ENCODE measurements at regions of chr17 and their contacts with region 1.

Region 1: DNA sequence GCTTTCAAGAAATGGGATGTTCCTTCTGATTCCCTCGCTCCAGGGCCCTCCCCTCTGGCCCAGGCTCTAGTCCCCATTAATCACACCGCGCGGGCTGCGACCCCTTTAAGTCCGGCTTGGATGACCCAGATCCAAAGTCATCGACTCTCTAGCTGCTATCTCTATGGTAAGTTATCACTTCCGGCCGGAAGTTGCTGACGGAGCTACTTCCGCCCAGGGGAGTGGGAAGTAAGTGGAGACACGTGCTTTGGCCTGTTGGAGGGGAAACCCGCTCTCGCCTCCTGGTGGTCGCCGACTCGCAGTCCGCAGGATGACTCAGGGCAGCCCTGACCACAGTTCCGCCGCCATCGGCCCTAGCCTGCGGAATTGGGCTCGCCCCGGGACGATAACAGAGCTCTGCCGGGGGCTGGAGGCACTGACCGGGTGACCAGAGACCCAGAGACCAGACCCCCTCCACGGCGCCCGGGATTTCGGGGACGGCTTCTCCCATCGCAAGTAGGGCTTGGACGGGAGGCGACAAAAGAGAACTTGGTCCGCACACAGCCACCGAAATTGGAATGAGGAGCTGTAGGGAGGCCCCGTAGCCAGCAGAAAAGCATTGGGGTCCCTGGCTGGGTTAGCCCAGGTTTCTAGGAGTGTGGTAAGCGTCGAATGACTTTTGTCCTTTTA is 52.2 kb upstream of the SEC14L1 start:
- DNase-seq: peak; percentile 95
- ATAC-seq: peak; percentile 86
- H3K4me3 Mint-ChIP-seq: peak overlapping the region; percentile 82
- H3K27ac Mint-ChIP-seq: peak overlapping the region; percentile 88
- H3K4me1 Mint-ChIP-seq: peaks cover 58% of the 10 kb centered on the region
- H3K27me3 Mint-ChIP-seq: peaks cover 3% of the 10 kb centered on the region

Region 2: GRCh38 chr17:77107506-77108433 is 19.2 kb after region 1 on chr17:
- CTCF ChIA-PET with region 1: interaction called, 22 read pairs
- DNase-seq: peak; percentile 83
- ATAC-seq: peak; percentile 55
- H3K4me3 Mint-ChIP-seq: peak overlapping the region; percentile 66
- H3K27ac Mint-ChIP-seq: peak overlapping the region; percentile 91
- H3K4me1 Mint-ChIP-seq: peaks cover 52% of the 10 kb centered on the region
- H3K27me3 Mint-ChIP-seq: no peaks in the 10 kb centered on the region

Region 3: DNA sequence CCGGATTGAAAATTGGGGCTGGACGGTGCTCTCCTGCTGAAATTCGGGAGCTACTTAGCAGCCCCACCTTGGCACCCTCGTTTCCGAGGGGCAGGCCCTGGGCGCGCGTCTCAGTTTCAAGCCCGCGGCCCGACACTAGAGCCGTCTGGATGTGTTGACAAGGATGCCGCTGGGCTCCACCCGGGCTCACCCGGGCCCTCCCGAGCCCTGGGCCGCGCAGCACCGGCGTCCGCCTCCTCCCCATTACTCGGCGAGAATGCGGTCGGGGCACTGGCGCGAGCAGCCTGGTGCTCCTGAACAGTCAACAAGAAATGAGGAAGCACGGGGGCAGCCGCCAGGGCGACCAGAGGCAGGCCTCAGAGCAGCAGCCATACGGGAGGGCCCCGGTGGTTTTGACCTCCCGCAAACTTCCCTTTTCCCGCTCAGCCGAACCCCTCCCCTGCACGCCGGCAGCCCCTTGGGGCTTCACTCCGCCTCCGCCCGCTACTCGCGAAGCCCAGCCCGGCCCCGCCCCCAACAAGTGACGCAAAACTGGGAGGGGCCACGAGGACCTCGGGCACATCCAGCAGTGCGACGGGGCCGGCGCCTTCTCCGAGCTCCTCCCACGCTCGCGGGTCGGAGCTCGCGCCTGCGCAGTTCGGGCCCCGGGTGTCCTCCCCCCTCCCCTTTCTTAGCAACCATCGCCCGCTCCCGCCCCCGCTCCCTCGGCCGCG is 51.7 kb after region 1 on chr17:
- CTCF ChIA-PET with region 1: interaction called, 32 read pairs
- DNase-seq: peak; percentile 100
- ATAC-seq: peak; percentile 90
- H3K4me3 Mint-ChIP-seq: peak overlapping the region; percentile 68
- H3K27ac Mint-ChIP-seq: peak overlapping the region; percentile 90
- H3K4me1 Mint-ChIP-seq: peaks cover 62% of the 10 kb centered on the region
- H3K27me3 Mint-ChIP-seq: no peaks in the 10 kb centered on the region

Region 4: DNA sequence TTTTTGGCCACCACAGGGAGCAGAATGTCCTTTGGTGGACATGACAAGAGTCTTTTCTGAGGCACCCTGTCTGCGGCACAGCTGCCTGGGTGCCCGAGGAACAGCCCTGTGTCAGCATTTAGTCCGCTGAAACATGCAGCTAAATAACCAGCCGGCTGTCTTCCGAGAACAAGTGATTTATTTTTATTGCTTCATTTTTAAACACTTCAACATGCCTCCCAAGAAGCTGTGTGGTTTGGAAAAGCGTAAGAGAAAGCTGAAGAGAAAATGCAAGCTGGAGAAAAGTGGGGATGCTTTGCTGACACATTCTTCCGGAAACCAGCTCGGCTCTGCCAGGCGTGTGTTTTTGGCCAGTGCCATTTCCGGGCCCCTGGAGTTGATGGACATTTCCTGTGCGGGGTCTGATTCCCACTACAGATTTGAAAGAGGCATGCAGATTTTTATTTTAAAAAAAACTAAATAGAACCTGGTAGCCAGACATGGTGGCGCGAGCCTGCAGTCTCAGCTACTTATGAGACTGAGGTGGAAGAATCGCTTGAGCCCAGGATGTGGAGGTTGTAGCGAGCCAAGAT is 146.9 kb after region 1 on chr17:
- CTCF ChIA-PET with region 1: interaction called, 30 read pairs
- DNase-seq: peak; percentile 73
- ATAC-seq: peak; percentile 67
- H3K4me3 Mint-ChIP-seq: peak overlapping the region; percentile 52
- H3K27ac Mint-ChIP-seq: peak overlapping the region; percentile 86
- H3K4me1 Mint-ChIP-seq: peaks cover 26% of the 10 kb centered on the region
- H3K27me3 Mint-ChIP-seq: no peaks in the 10 kb centered on the region

Region 5: DNA sequence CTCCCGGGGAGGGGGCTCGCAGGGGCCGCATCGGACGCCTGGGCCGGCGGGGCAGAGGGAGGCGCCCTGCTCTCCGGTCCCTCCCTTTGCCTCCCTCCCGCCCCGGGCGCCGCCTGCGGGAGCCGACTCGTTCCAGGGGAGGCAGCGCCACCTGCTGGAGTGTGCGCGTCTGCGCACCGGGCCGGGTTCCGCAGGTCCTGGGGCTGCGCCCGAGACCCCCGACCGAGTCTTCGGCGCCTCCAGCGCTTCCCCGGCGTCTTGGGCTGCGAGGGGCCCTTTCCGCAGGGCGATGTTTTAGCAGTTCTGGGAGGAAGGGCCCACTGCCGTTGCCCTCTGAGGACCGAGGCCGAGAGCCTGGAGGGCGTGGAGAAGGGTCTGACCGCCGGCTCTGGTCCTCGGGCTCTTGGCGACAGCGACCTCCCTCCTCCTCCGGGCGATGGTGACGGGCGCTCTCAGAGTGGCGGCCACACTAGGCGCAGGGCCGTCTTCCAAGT is 158.5 kb after region 1 on chr17:
- CTCF ChIA-PET with region 1: interaction called, 46 read pairs
- DNase-seq: peak; percentile 92
- ATAC-seq: peak; percentile 99
- H3K4me3 Mint-ChIP-seq: peak overlapping the region; percentile 49
- H3K27ac Mint-ChIP-seq: no peak overlapping the region
- H3K4me1 Mint-ChIP-seq: peaks cover 23% of the 10 kb centered on the region
- H3K27me3 Mint-ChIP-seq: peaks cover 27% of the 10 kb centered on the region

Measured in activated CD8-positive, alpha-beta memory T cell treated with anti-CD3 and anti-CD28 coated beads, Interleukin-2, amount 10 ng/mL, durations not matched to agents 7 days and 5 days (primary cell).